ENCODE measurements at regions of chr5 and their contacts with region 1.

Region 1: GRCh38 chr5:81779125-81779915 is 28.4 kb upstream of the SSBP2 start:
- DNase-seq: peak; percentile 49
- H3K4me3 ChIP-seq: peak overlapping the region; percentile 62
- H3K27ac ChIP-seq: peak overlapping the region; percentile 2
- H3K4me1 ChIP-seq: peaks cover 17% of the 10 kb centered on the region
- CTCF ChIP-seq: no peak

Region 2: GRCh38 chr5:81679885-81680284 is 99.4 kb before region 1 on chr5:
- CTCF ChIA-PET with region 1: no interaction called
- POLR2A ChIA-PET with region 1: no interaction called
- intact Hi-C with region 1: no loop called
- DNase-seq: no peak
- H3K4me3 ChIP-seq: no peak overlapping the region
- H3K27ac ChIP-seq: no peak overlapping the region
- H3K4me1 ChIP-seq: peaks cover 3% of the 10 kb centered on the region
- CTCF ChIP-seq: no peak

Region 3: DNA sequence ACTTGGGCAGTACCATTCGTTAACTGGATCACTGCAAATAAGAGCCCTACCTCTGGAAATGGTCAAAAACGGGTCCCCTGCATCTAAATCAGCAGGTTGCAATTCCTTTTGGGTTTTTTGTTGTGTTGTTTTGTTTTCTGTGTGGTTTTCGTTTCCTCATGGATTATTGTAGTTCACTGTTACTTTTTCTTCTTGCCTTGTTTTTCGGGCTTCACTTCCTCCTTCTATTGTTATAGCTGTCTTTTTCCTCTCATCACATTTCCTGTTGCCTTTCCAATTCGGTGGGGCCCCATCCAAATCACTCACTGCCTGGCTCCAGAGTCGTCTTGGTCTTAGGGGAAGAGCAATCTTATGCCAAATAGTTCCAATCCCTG is 19.7 kb before region 1 on chr5:
- CTCF ChIA-PET with region 1: interaction called, 5 read pairs
- POLR2A ChIA-PET with region 1: interaction called, 15 read pairs
- intact Hi-C with region 1: no loop called
- DNase-seq: peak; percentile 36
- H3K4me3 ChIP-seq: peak overlapping the region; percentile 20
- H3K27ac ChIP-seq: no peak overlapping the region
- H3K4me1 ChIP-seq: peaks cover 27% of the 10 kb centered on the region
- CTCF ChIP-seq: no peak

Region 4: DNA sequence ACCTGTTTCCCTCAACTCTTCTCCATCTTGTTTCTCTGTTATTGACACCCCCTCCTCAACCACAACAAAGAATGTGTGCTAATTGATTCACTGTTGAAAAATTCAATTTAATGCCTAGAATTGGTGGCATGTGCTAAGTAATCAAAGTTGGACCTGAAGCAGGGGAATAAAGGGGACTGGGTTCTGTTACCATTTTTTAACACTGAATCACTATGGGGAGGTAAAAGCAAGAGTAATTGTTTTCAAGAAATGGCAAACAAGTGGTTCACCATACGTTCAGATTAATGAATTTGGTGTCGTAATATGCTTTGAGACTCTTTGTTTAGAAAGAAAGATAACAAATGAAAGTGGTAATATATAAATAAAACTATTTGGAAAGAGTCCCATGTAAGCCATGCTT is 11.4 kb before region 1 on chr5:
- CTCF ChIA-PET with region 1: interaction called, 3 read pairs
- POLR2A ChIA-PET with region 1: interaction called, 15 read pairs
- intact Hi-C with region 1: no loop called
- DNase-seq: no peak
- H3K4me3 ChIP-seq: no peak overlapping the region
- H3K27ac ChIP-seq: no peak overlapping the region
- H3K4me1 ChIP-seq: no peaks in the 10 kb centered on the region
- CTCF ChIP-seq: no peak

Region 5: DNA sequence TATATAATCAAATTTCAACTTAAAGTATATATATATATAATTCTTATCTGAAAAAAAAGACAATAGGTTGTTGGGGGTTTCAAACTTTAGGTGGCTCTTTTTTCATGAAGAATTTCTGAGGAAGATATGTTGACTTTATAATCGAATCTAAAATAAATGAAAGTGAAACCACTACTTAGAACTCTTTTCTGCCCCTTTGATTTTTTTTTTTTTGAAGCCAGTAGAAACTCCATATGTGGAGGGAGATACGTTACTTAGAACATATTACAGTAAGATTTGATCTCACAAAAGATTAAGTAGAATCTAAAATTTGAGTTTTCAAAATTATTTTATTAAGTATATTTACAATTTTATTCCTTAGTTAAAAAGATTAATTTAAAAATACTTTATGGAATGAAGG is 289.4 kb after region 1 on chr5:
- CTCF ChIA-PET with region 1: no interaction called
- POLR2A ChIA-PET with region 1: no interaction called
- intact Hi-C with region 1: no loop called
- DNase-seq: no peak
- H3K4me3 ChIP-seq: no peak overlapping the region
- H3K27ac ChIP-seq: no peak overlapping the region
- H3K4me1 ChIP-seq: no peaks in the 10 kb centered on the region
- CTCF ChIP-seq: no peak